ENCODE measurements at regions of chr20 and their contacts with region 1.

Region 1: GRCh38 chr20:44187051-44187762 is at the start of gene JPH2:
- DNase-seq: no peak
- ATAC-seq: peak; percentile 34
- H3K4me3 ChIP-seq: peak within 1 kb of the TSS; percentile 6 to 63 (median 52)
- H3K27ac ChIP-seq: no peak within 1 kb of the TSS
- H3K4me1 ChIP-seq: peaks cover 29% of the 10 kb centered on the region
- H3K27me3 ChIP-seq: peaks cover 10 to 51% of the 10 kb centered on the region in 2 experiments; a peak in 4 of 5 replicates
- CTCF ChIP-seq: no peak
- EP300 ChIP-seq: no peak
- POLR2A ChIP-seq: no peak
- RAD21 ChIP-seq: no peak
- total RNA-seq, gene JPH2: not detected in 2 replicates

Region 2: DNA sequence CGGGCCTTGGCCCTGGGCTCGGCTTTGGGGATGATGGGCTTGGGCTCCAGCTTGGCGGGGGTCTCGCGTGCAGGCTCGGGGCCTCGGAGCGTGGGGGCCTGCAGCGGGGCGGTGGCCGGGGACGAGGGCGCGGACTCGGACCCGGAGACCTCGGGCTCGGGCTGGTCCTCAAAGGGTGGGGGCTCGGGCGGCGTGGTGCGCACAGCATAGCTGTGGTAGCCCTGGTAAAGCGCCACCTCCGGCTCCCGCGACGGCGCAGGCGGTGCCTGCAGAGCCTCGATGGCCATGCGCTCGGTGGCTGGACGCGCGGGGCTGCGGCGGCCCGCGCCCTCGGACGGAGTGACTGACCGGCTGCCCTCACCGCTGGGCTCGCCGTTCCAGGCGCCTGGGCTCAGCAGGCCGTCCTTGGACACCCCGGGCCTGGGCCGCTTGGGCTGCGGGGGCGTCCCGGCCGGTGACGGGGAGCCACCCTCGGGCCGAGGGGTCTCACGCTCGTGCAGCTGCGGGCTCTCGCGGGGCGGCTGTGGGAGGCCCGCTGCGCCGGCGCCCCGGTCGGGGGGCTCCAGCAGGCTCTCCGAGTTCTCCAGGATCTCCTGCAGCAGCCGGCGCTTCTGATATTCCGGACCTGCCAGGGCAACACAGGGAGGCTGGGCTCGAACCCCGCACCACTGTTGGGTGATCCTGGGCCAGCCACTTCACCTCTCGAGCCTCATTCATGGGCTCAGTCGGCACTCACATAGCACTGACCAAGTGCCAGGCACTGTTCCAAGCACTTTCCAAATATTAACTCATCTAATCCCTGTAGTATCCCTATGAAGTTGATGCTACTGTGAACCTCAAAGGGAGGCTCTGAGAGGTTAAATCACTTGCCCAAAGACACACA is 71.2 kb before region 1 on chr20:
- CTCF ChIA-PET with region 1: interaction called, 110 read pairs
- POLR2A ChIA-PET with region 1: interaction called, 8 read pairs
- in situ Hi-C with region 1: loop called (anchors 5 kb)
- intact Hi-C with region 1: loop called (anchors 1 kb)
- DNase-seq: no peak
- ATAC-seq: no peak; the same call in 2 of the 3 replicates
- H3K4me3 ChIP-seq: no peak overlapping the region
- H3K27ac ChIP-seq: no peak overlapping the region
- H3K4me1 ChIP-seq: peaks cover 17% of the 10 kb centered on the region
- H3K27me3 ChIP-seq: peaks cover 7 to 54% of the 10 kb centered on the region in 2 experiments
- CTCF ChIP-seq: no peak
- EP300 ChIP-seq: no peak
- POLR2A ChIP-seq: no peak
- RAD21 ChIP-seq: no peak